Left cardiac atrium (tissue), 4 donors: ENCODE measurements at regions of chr3 and their contacts with region 1.

Region 1: GRCh38 chr3:85068911-85069310 is 110.1 kb downstream of the CADM2 start:
- DNase-seq: no peak
- ATAC-seq: no peak

Region 2: GRCh38 chr3:85041562-85042055 is 27.3 kb before region 1 on chr3:
- intact Hi-C with region 1: loop called in 1 of 2 experiments (anchors 2 kb)
- DNase-seq: no peak
- ATAC-seq: no peak

Region 3: GRCh38 chr3:85387913-85388505 is 319.1 kb after region 1 on chr3:
- intact Hi-C with region 1: no loop called
- DNase-seq: no peak
- ATAC-seq: no peak